Right cardiac atrium (tissue), 5 donors: ENCODE measurements at regions of chr1 and their contacts with region 1.

Region 1: DNA sequence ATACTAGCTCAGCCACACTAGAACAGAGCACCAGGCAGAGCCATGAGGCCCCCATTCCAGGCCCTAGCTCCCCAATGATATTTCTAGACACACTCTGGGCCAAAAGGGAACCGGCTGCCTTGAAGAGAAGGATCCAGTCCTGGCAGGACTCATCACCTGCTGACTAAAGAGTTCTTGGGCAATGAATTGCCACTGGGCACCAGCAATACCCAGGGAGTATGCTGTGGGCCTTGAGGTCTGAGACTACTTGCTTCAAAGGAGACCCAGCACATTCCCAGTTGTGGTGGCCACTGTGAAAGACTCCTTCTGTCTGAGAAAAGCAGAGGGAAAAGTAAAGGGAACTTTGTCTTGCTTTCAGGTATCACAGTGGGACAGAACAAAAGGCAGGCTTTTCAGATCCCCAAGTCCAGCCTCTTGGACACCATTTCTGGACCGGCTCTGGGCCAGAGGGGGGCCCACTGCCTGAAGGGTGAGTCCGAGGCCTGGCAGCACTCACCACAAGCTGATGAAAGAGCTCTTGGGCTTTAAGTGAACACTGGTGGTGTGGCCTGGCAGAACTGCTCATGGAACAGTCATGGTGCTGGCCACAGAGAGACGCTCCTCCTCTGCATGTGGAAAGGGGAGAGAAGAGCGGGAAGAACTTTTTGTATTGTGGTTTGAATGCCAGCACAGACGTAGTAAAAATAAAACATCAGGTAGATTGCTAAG is 72.5 kb downstream of the CDC42BPA start:
- DNase-seq: peak; percentile 51 to 66 (median 55)
- ATAC-seq: peak; percentile 64 to 84
- H3K4me3 ChIP-seq: no peak overlapping the region
- H3K27ac ChIP-seq: peak overlapping the region; percentile 36
- H3K4me1 ChIP-seq: peaks cover 7% of the 10 kb centered on the region
- H3K27me3 ChIP-seq: no peaks in the 10 kb centered on the region

Region 2: DNA sequence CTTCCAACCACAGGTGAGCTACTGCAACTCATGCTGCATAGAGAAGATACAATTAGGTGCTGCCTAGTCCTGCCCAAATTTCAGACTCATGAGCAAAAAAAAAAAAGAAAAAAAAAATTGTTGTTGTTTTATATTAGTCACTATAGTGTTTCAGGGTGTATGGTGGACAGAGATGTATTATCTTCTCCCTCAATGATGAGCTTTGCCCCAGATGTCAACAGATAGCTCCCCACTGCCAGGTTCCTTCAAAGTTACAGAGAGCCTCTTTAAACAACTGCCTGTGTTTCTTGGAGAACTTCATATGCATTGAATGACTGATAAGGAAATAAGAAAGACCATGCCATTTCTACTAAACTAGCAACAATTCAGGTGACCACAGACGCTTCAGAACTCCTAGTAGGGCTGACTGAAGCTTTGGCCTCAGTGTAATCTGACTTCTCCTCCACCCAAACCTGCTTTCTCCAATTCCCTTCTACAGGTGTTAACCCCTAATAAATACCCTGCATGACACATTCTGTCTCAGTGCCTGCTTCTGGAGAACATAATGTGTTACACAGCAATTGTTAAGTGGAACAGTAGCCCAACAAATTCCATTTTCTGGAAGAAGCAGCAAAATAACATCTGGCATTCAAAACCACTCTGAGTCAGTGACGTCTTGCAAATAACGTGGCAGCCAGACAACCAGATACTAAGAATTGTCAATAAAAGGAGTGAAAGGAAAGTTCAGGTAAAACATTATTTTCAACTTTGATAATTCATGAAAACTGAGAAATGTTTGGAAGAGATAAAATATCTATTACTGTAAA is 75.2 kb before region 1 on chr1:
- intact Hi-C with region 1: no loop called
- DNase-seq: no peak
- ATAC-seq: no peak
- H3K4me3 ChIP-seq: no peak overlapping the region
- H3K27ac ChIP-seq: no peak overlapping the region
- H3K4me1 ChIP-seq: peaks cover 4% of the 10 kb centered on the region
- H3K27me3 ChIP-seq: no peaks in the 10 kb centered on the region

Region 3: DNA sequence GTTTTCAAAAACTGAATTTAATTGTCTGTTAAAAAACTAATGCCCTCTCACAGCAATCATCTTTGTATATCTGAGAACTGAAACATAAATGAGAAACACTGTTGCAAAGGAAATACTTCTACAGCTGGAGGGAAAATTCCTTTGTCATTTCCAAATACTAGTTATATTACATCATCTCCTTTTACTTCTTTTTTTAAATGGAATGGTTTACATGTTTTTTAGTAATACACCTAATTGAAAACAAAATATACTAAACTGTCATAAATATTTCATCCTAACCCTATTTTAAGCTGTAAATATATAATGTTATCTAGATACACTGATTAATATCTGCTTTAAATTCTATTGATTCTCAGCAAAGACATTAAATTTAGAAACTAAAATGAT is 53.5 kb after region 1 on chr1:
- intact Hi-C with region 1: loop called in 1 of 4 experiments (anchors 10 kb)
- DNase-seq: no peak
- ATAC-seq: no peak
- H3K4me3 ChIP-seq: no peak overlapping the region
- H3K27ac ChIP-seq: no peak overlapping the region
- H3K4me1 ChIP-seq: peaks cover 3% of the 10 kb centered on the region
- H3K27me3 ChIP-seq: no peaks in the 10 kb centered on the region